Transverse colon (tissue), 4 donors: ENCODE measurements at regions of chr19 and their contacts with region 1.

Region 1: GRCh38 chr19:13195678-13196077 is 45.5 kb downstream of the IER2 start:
- DNase-seq: peak; percentile 85
- H3K4me3 ChIP-seq: no peak overlapping the region
- H3K27ac ChIP-seq: peak overlapping the region in 2 of 4 donors; percentile 48 to 60
- H3K4me1 ChIP-seq: peaks cover 0 to 42% (median 21%) of the 10 kb centered on the region in 4 donors
- H3K27me3 ChIP-seq: no peaks in the 10 kb centered on the region
- CTCF ChIP-seq: peak in 2 of 5 experiments; percentile 31 to 41
- EP300 ChIP-seq: no peak
- POLR2A ChIP-seq: no peak

Region 2: GRCh38 chr19:13255041-13255718 is 59.5 kb after region 1 on chr19:
- in situ Hi-C with region 1: loop called in 1 of 4 experiments (anchors 10 kb)
- intact Hi-C with region 1: no loop called
- DNase-seq: no peak
- H3K4me3 ChIP-seq: no peak overlapping the region
- H3K27ac ChIP-seq: no peak overlapping the region
- H3K4me1 ChIP-seq: no peaks in the 10 kb centered on the region
- H3K27me3 ChIP-seq: peaks cover 14% of the 10 kb centered on the region
- CTCF ChIP-seq: no peak
- EP300 ChIP-seq: no peak
- POLR2A ChIP-seq: no peak

Region 3: GRCh38 chr19:13302526-13303270 is 107.0 kb after region 1 on chr19:
- in situ Hi-C with region 1: no loop called
- intact Hi-C with region 1: no loop called
- DNase-seq: no peak
- H3K4me3 ChIP-seq: no peak overlapping the region
- H3K27ac ChIP-seq: no peak overlapping the region
- H3K4me1 ChIP-seq: no peaks in the 10 kb centered on the region
- H3K27me3 ChIP-seq: peaks cover 35% of the 10 kb centered on the region
- CTCF ChIP-seq: no peak
- EP300 ChIP-seq: no peak
- POLR2A ChIP-seq: no peak